Lower leg skin (tissue), 4 donors: ENCODE measurements at regions of chr4 and their contacts with region 1.

Region 1: GRCh38 chr4:152843481-152844090 is 63.8 kb downstream of the ARFIP1 start:
- DNase-seq: no peak
- H3K4me3 ChIP-seq: no peak overlapping the region
- CTCF ChIP-seq: no peak
- POLR2A ChIP-seq: no peak

Region 2: GRCh38 chr4:153083447-153083947 is 239.9 kb after region 1 on chr4:
- intact Hi-C with region 1: loop called (anchors 10 kb)
- DNase-seq: peak; percentile 60 to 83
- H3K4me3 ChIP-seq: no peak overlapping the region
- CTCF ChIP-seq: peak in 1 of 3 donors; percentile 5
- POLR2A ChIP-seq: no peak

Region 3: DNA sequence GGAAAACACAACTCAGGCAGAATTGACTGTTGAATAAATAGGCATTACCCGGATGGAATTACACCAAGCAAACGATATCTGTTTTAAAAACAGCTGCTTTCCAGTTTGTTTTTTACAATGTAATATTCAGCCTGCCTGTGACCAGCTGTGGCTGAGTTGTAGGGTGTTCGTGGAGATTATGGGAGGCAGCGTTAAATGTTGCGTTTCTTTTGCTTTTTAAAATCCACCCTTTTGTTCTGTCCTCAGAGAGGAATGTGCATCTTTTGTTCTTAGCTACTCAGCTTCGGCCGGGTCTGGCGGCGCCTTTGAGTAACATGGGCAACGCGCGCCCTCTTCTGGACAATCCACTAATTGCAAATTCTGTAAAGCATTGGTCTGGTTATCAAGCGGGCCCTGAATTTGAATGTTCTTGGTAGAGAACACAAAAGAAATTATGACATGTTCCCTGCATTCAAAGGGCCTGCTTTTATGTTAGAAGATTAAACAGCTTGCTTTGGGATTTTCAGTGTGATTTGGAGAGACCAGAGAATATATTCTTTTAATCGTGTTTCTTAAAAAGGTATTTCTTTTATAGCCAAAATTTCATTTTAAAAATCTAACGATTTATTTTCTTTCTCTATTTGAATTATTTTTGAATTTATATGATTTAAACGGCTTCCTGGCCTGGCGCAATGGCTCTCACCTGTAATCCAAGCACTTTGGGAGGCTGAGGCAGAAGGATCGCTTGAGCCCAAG is 284.3 kb after region 1 on chr4:
- intact Hi-C with region 1: loop called (anchors 10 kb)
- DNase-seq: peak; percentile 92 to 95
- H3K4me3 ChIP-seq: no peak overlapping the region
- CTCF ChIP-seq: peak in 1 of 3 donors; percentile 31
- POLR2A ChIP-seq: no peak

Region 4: DNA sequence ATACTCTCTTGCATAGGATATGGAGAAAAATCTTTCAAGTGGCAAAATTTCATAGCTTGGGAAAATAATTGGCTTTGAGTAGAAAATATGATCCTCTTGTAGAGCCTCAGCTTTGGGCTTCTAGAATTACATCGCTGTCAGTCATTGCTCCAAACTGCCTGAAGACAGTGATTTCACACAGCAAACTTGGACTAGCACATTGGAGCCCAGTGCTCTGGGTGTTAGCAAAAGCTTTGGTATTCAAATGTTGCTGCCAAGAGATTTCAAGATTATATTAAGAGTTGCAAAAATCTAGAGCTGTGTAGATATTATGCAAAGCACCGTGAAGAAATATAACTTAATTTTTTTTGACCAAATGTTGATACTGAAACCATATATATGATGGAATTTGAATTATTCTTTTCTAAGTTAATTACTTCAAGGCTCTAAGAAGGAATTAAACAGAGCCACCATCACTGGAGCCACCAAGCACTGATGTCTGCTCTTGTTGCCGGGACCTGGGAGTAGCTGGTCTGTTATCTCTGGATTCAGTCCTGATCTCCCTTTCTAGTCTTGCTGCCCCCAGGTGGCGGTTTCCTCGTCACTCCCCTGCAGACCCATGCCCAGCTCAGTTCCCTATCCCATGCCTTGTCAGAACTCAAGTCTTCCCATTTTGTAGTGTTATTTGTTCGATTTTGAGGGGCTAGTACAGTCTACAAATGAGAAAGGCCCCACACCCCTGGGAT is 1206.0 kb after region 1 on chr4:
- intact Hi-C with region 1: no loop called
- DNase-seq: peak in 1 of 2 donors; percentile 31
- H3K4me3 ChIP-seq: no peak overlapping the region
- CTCF ChIP-seq: no peak
- POLR2A ChIP-seq: no peak